Activated T-helper 1 cell treated with anti-CD3 and anti-CD28 coated beads, Interleukin-12 subunit alpha, Interleukin-12 subunit beta, Interleukin-2, Interleukin-4 antibody, amounts not matched to agents 30 ng/mL and 10 ng/mL and 1 ng/mL, durations not matched to agents 14 hours and 24 hours and 36 hours (primary cell): ENCODE measurements at regions of chr16 and their contacts with region 1.

Region 1: GRCh38 chr16:22190776-22191531 is 15.1 kb upstream of the EEF2K start:
- DNase-seq: peak; percentile 94
- H3K4me3 Mint-ChIP-seq: peak overlapping the region; percentile 88
- H3K27ac Mint-ChIP-seq: peak overlapping the region; percentile 99
- H3K4me1 Mint-ChIP-seq: peaks cover 68% of the 10 kb centered on the region
- H3K27me3 Mint-ChIP-seq: peaks cover 4% of the 10 kb centered on the region

Region 2: DNA sequence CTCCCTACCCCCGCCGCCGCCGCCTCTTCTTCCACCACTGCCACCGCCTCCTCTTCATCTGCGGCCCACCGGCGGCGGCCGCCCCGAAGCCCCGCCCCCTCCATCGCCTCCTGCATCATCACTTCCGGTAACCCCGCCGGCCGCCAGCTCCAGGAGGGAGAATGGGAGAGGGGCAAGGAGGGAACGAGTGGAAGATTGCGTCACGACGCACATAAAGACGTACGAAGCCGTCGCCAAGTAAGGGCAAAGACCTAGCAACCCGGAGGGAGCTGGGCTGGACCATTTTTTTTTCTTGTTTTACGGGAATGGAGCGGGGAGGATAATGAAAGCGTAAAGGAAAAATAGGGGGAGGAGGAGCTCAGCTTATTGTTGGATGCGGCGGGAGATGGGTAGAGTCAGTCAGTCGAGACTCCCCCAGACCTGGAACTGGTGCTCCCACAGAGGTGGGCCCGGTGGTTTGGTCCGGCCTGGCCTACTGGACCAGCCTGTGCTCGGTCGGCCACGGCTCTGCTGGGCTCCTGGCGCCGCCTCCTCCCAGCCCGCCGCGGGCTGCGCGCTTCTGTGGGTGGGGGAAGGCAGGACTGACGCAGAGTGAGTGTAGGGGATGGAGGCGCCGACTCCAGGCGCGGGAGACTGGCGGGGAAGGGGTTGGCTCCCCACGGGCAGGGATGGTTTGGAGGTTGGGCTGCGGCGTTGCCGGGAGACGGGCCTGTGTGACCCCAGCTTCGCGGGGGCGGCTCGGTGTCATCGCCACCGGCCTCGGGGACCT is 1290.5 kb before region 1 on chr16 and contains the starts of genes DCUN1D3 and LYRM1:
- intact Hi-C with region 1: loop called (anchors 2 kb)
- DNase-seq: peak; percentile 81
- H3K4me3 Mint-ChIP-seq: peak within 1 kb of the TSS; percentile 90
- H3K27ac Mint-ChIP-seq: peak within 1 kb of the TSS; percentile 100
- H3K4me1 Mint-ChIP-seq: peaks cover 76% of the 10 kb centered on the region
- H3K27me3 Mint-ChIP-seq: no peaks in the 10 kb centered on the region
- total RNA-seq, gene DCUN1D3: 14.5 and 16.7 TPM in 2 replicates
- total RNA-seq, gene LYRM1: 21.2 and 23.7 TPM in 2 replicates

Region 3: GRCh38 chr16:21952793-21953540 is 238.0 kb before region 1 on chr16 and contains the start of gene UQCRC2:
- intact Hi-C with region 1: loop called (anchors 1 kb)
- DNase-seq: peak; percentile 85
- H3K4me3 Mint-ChIP-seq: peak within 1 kb of the TSS; percentile 99
- H3K27ac Mint-ChIP-seq: peak within 1 kb of the TSS; percentile 95
- H3K4me1 Mint-ChIP-seq: peaks cover 50% of the 10 kb centered on the region
- H3K27me3 Mint-ChIP-seq: no peaks in the 10 kb centered on the region
- total RNA-seq, gene UQCRC2: 235 and 260 TPM in 2 replicates

Region 4: DNA sequence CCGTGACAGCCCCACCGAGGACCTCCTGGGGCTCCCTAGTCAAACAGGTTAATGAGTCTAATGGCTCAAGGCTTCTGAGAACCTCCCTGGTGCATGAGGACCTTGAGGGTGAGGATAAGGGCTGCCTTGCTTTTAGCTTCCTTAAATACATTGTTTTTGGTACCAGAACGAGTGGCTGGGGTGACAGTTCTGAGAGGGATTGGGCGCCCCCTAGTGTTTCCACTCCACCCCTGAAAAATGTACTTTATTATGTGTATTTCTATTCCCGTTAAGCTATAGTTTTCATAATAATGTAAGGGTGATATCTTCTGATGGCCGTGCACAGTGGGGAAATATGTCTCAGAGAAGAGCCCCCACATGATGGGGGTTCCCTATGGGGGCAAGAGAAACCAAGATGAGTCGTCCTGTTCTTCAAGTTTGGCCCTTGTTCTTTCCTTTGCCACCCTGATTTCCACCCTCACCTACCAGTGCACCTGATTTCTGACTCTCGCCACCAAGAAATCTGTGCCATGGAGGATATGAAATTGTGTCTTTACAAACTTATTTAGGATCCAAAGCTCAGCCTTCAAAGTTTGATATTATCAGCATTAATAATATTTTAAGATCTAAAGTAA is 113.1 kb before region 1 on chr16:
- intact Hi-C with region 1: loop called (anchors 1 kb)
- DNase-seq: peak; percentile 48
- H3K4me3 Mint-ChIP-seq: no peak overlapping the region
- H3K27ac Mint-ChIP-seq: no peak overlapping the region
- H3K4me1 Mint-ChIP-seq: peaks cover 7% of the 10 kb centered on the region
- H3K27me3 Mint-ChIP-seq: no peaks in the 10 kb centered on the region

Region 5: DNA sequence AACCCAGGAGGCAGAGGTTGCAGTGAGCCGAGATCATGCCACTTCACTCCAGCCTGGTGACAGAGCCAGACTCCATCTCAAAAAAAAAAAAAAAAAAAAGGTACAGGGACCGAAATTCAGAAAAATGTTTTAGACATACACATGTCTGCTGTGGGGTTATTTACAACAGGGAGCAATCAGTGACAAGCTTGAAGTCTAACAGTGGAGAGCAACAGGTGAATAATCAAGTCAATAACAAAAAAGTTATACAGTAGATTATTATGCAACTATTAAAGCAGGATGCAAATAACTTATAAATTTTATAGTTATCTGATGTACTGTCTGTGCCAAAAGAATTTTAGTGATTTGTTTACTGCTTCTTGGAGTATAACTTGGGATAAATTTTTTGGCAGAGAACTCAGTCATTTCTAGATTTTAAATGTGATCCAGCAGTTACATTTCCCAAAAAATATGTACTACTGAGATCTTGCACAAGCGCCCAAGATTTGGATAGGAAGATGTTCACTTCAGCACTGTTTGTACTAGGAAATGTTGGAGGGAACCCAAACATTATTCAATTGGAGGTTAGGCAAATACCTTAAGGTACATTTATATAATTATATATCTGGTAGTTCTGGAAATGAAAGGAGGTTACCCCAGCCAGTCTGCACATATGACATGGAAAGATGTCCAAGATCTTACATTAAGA is 49.2 kb after region 1 on chr16:
- intact Hi-C with region 1: loop called (anchors 1 kb)
- DNase-seq: no peak
- H3K4me3 Mint-ChIP-seq: no peak overlapping the region
- H3K27ac Mint-ChIP-seq: no peak overlapping the region
- H3K4me1 Mint-ChIP-seq: peaks cover 24% of the 10 kb centered on the region
- H3K27me3 Mint-ChIP-seq: no peaks in the 10 kb centered on the region

Region 6: GRCh38 chr16:22374311-22375116 is 183.6 kb after region 1 on chr16 and contains the start of gene CDR2:
- intact Hi-C with region 1: loop called (anchors 1 kb)
- DNase-seq: peak; percentile 99
- H3K4me3 Mint-ChIP-seq: peak within 1 kb of the TSS; percentile 97
- H3K27ac Mint-ChIP-seq: peak within 1 kb of the TSS; percentile 91
- H3K4me1 Mint-ChIP-seq: peaks cover 44% of the 10 kb centered on the region
- H3K27me3 Mint-ChIP-seq: peaks cover 2% of the 10 kb centered on the region
- total RNA-seq, gene CDR2: 43.5 and 47.2 TPM in 2 replicates